Activated T-helper 2 cell treated with anti-CD3 and anti-CD28 coated beads, Interferon-gamma antibody, Interleukin-2, Interleukin-4, amounts not matched to agents 10 μg/mL and 5 μg/mL and 100 μg/mL, durations not matched to agents 14 hours and 24 hours and 36 hours (primary cell): ENCODE measurements at regions of chr1 and their contacts with region 1.

Region 1: GRCh38 chr1:236214761-236215160 is 67.0 kb downstream of the ERO1B start:
- DNase-seq: no peak
- H3K4me3 Mint-ChIP-seq: no peak overlapping the region
- H3K27ac Mint-ChIP-seq: no peak overlapping the region
- H3K4me1 Mint-ChIP-seq: peaks cover 2% of the 10 kb centered on the region
- H3K27me3 Mint-ChIP-seq: no peaks in the 10 kb centered on the region

Region 2: GRCh38 chr1:236181059-236181458 is 33.7 kb before region 1 on chr1:
- intact Hi-C with region 1: no loop called
- DNase-seq: no peak
- H3K4me3 Mint-ChIP-seq: no peak overlapping the region
- H3K27ac Mint-ChIP-seq: no peak overlapping the region
- H3K4me1 Mint-ChIP-seq: no peaks in the 10 kb centered on the region
- H3K27me3 Mint-ChIP-seq: no peaks in the 10 kb centered on the region

Region 3: DNA sequence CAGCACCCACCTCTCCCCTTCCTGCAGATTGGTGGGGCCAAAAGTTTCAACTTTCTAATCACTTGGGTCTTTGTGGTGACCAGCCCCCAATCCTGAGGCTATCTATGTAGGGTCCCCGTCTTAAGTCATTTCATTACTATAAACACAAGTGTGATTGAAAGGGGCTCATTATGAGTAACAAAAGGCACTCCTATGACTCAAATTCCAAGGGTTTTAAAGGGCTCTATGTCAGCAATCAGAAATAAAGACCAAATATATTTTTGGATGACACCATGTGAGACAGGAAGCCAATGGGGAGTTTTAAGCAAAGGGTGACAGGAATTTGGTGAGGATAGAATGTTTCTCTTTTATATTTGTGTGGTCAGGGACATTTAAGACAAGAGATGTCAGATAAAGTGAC is 60.8 kb after region 1 on chr1:
- intact Hi-C with region 1: loop called (anchors 10 kb)
- DNase-seq: no peak
- H3K4me3 Mint-ChIP-seq: no peak overlapping the region
- H3K27ac Mint-ChIP-seq: no peak overlapping the region
- H3K4me1 Mint-ChIP-seq: peaks cover 11% of the 10 kb centered on the region
- H3K27me3 Mint-ChIP-seq: peaks cover 21% of the 10 kb centered on the region